ENCODE measurements at regions of chr17 and their contacts with region 1.

Region 1: GRCh38 chr17:68457539-68458259 is 403 bp upstream of the WIPI1 start:
- DNase-seq: peak; percentile 98
- ATAC-seq: peak; percentile 93
- H3K4me3 ChIP-seq: peak overlapping the region; percentile 65
- H3K27ac ChIP-seq: no peak overlapping the region
- H3K4me1 ChIP-seq: peaks cover 2% of the 10 kb centered on the region; the same call in 1 of the 2 replicates
- H3K27me3 ChIP-seq: peaks cover 2% of the 10 kb centered on the region; the same call in 1 of the 2 replicates
- CTCF ChIP-seq: no peak
- POLR2A ChIP-seq: no peak
- RAD21 ChIP-seq: no peak

Region 2: GRCh38 chr17:67959288-67959900 is 498.3 kb before region 1 on chr17:
- CTCF ChIA-PET with region 1: no interaction called
- POLR2A ChIA-PET with region 1: no interaction called
- dilution Hi-C with region 1: no loop called
- in situ Hi-C with region 1: loop called (anchors 25 kb)
- intact Hi-C with region 1: loop called (anchors 10 kb)
- DNase-seq: no peak
- ATAC-seq: no peak
- H3K4me3 ChIP-seq: no peak overlapping the region
- H3K27ac ChIP-seq: peak overlapping the region; percentile 17; the same call in 1 of the 2 replicates
- H3K4me1 ChIP-seq: peaks cover 2% of the 10 kb centered on the region; the same call in 1 of the 2 replicates
- H3K27me3 ChIP-seq: no peaks in the 10 kb centered on the region
- CTCF ChIP-seq: no peak
- POLR2A ChIP-seq: no peak
- RAD21 ChIP-seq: no peak

Region 3: DNA sequence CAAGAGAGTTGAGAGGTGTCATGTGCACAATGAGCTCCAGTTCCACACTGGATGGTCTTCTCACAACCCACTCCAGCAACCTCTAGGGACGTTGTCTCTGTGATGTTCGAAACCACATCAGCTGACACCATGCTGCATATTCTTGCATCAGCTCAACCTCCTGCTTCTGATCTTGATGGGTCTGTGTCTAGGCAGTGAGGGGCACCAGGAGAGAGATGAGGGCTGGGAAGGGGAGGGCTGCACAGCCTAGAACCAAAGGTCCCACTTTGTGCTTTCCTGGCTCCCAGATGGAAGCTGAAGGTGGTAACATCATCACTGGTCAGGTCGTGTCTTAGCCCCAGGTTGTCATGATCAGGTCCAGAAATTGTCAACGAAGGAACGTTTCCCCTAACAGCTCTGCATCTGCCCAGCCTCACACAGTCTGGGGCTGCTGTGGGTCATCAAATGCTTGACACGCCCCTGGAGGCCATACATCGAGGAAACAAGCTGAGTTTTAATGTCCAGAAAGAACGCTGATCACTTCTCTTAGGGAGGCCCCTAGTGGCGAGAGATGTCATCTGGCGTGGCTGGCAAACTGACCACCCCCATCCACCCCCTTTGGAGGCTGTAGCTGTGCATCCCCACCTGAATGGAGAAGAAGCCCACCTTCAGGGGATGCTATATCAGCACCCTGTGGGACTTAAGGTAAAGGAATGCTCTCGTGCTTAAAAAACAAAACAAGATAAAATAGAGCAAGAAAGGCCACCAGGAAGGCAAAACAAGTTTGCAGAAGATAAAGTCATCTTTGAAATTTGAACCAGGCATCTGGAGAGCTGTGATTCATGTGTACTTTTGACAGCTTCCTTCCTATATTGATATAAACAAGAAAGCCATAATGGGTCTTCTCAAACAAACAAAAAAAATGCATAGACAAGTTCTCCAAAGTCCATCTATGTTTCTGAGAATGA is 58.7 kb before region 1 on chr17:
- CTCF ChIA-PET with region 1: interaction called, 15 read pairs
- POLR2A ChIA-PET with region 1: no interaction called
- dilution Hi-C with region 1: no loop called
- in situ Hi-C with region 1: no loop called
- intact Hi-C with region 1: no loop called
- DNase-seq: peak; percentile 81
- ATAC-seq: peak; percentile 95
- H3K4me3 ChIP-seq: no peak overlapping the region
- H3K27ac ChIP-seq: 0 out of 2 replicates have a peak overlapping the region, but pooled peaks have one; percentile 0
- H3K4me1 ChIP-seq: peaks cover 4% of the 10 kb centered on the region
- H3K27me3 ChIP-seq: no peaks in the 10 kb centered on the region
- CTCF ChIP-seq: peak; percentile 90
- POLR2A ChIP-seq: no peak
- RAD21 ChIP-seq: peak; percentile 89

Region 4: GRCh38 chr17:69246726-69247375 is 789.2 kb after region 1 on chr17:
- CTCF ChIA-PET with region 1: no interaction called
- POLR2A ChIA-PET with region 1: no interaction called
- dilution Hi-C with region 1: no loop called
- in situ Hi-C with region 1: no loop called
- intact Hi-C with region 1: loop called (anchors 10 kb)
- DNase-seq: peak; percentile 55
- ATAC-seq: peak; percentile 75
- H3K4me3 ChIP-seq: no peak overlapping the region
- H3K27ac ChIP-seq: no peak overlapping the region
- H3K4me1 ChIP-seq: no peaks in the 10 kb centered on the region
- H3K27me3 ChIP-seq: no peaks in the 10 kb centered on the region
- CTCF ChIP-seq: peak; percentile 62
- POLR2A ChIP-seq: no peak
- RAD21 ChIP-seq: peak; percentile 58

Measured in IMR-90 (cell line).